CD4-positive, alpha-beta memory T cell (primary cell): ENCODE measurements at regions of chr18 and their contacts with region 1.

Region 1: GRCh38 chr18:45664824-45665763 is 49.8 kb downstream of the SLC14A2 start:
- DNase-seq: peak; percentile 61 to 71 (median 66)
- H3K4me3 ChIP-seq: no peak overlapping the region
- H3K4me3 Mint-ChIP-seq: peak overlapping the region in 7 of 8 donors; percentile 21 to 80 (median 61)
- H3K27ac ChIP-seq: no peak overlapping the region
- H3K27ac Mint-ChIP-seq: peak overlapping the region; percentile 47 to 91 (median 88)
- H3K4me1 ChIP-seq: peaks cover 56% of the 10 kb centered on the region
- H3K4me1 Mint-ChIP-seq: peaks cover 42 to 63% (median 52%) of the 10 kb centered on the region in 4 donors
- H3K27me3 ChIP-seq: no peaks in the 10 kb centered on the region
- H3K27me3 Mint-ChIP-seq: no peaks in the 10 kb centered on the region

Region 2: GRCh38 chr18:45621061-45621511 is 44.0 kb before region 1 on chr18:
- CTCF ChIA-PET with region 1: interaction called, 35 read pairs
- POLR2A ChIA-PET with region 1: no interaction called
- intact Hi-C with region 1: loop called (anchors 5 kb)
- DNase-seq: peak in 4 of 5 donors; percentile 38 to 52 (median 46)
- H3K4me3 ChIP-seq: no peak overlapping the region
- H3K4me3 Mint-ChIP-seq: no peak overlapping the region
- H3K27ac ChIP-seq: no peak overlapping the region
- H3K27ac Mint-ChIP-seq: no peak overlapping the region
- H3K4me1 ChIP-seq: no peaks in the 10 kb centered on the region
- H3K4me1 Mint-ChIP-seq: no peaks in the 10 kb centered on the region
- H3K27me3 ChIP-seq: no peaks in the 10 kb centered on the region
- H3K27me3 Mint-ChIP-seq: peaks cover 4 to 7% of the 10 kb centered on the region in 2 donors

Region 3: DNA sequence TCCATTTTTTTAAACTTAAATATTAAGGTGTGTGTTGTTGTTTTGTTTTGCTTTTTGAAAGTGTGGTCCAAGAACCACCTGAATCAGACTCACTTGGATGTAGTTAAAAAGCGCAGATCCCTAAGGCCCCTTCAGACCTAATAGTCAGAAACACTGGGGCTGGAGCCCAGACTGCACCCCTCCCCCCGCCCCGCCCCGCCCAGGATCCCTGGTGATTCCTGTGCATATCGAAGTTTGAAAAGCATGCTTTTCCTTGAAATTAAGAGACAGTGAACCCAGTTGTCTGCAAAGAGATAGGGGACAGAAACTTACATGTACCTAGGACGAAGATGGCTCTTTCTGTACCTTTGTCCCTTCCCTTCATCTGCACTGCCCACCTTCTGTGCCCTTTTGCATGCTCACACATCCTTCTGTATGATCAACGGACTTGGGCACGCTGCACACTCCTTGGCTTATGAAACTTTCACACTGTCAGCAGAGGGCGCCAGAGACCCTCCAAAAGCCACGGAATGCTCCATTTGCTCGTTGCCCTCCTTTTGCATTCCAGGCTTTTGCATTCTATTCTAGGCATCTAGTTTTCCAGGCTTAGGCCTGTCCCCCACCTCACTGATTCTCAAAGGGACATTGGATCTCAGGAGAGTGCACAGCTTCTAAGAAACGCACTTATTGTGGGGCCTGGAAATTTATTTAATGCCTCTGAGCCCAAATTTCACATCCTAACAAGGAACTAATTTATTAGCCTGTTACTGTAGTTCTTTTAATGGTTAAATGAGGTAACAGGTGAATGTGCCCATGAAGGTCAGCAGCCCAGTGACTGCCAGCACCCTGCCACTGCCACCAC is 26.1 kb after region 1 on chr18:
- CTCF ChIA-PET with region 1: interaction called, 304 read pairs
- POLR2A ChIA-PET with region 1: interaction called, 169 read pairs
- intact Hi-C with region 1: loop called (anchors 1 kb)
- DNase-seq: peak; percentile 67 to 72 (median 68)
- H3K4me3 ChIP-seq: no peak overlapping the region
- H3K4me3 Mint-ChIP-seq: peak overlapping the region in 2 of 8 donors; percentile 59 to 61
- H3K27ac ChIP-seq: no peak overlapping the region
- H3K27ac Mint-ChIP-seq: peak overlapping the region in 3 of 7 donors; percentile 19 to 82 (median 49)
- H3K4me1 ChIP-seq: peaks cover 53% of the 10 kb centered on the region
- H3K4me1 Mint-ChIP-seq: peaks cover 39 to 51% (median 43%) of the 10 kb centered on the region in 4 donors
- H3K27me3 ChIP-seq: no peaks in the 10 kb centered on the region
- H3K27me3 Mint-ChIP-seq: peaks cover 0 to 3% of the 10 kb centered on the region in 2 donors

Region 4: GRCh38 chr18:45751766-45752165 is 86.7 kb after region 1 on chr18:
- CTCF ChIA-PET with region 1: no interaction called
- POLR2A ChIA-PET with region 1: no interaction called
- intact Hi-C with region 1: no loop called
- DNase-seq: no peak
- H3K4me3 ChIP-seq: no peak overlapping the region
- H3K4me3 Mint-ChIP-seq: no peak overlapping the region
- H3K27ac ChIP-seq: no peak overlapping the region
- H3K27ac Mint-ChIP-seq: no peak overlapping the region
- H3K4me1 ChIP-seq: no peaks in the 10 kb centered on the region
- H3K4me1 Mint-ChIP-seq: no peaks in the 10 kb centered on the region
- H3K27me3 ChIP-seq: no peaks in the 10 kb centered on the region
- H3K27me3 Mint-ChIP-seq: peaks cover 10 to 19% of the 10 kb centered on the region in 2 donors

Region 5: DNA sequence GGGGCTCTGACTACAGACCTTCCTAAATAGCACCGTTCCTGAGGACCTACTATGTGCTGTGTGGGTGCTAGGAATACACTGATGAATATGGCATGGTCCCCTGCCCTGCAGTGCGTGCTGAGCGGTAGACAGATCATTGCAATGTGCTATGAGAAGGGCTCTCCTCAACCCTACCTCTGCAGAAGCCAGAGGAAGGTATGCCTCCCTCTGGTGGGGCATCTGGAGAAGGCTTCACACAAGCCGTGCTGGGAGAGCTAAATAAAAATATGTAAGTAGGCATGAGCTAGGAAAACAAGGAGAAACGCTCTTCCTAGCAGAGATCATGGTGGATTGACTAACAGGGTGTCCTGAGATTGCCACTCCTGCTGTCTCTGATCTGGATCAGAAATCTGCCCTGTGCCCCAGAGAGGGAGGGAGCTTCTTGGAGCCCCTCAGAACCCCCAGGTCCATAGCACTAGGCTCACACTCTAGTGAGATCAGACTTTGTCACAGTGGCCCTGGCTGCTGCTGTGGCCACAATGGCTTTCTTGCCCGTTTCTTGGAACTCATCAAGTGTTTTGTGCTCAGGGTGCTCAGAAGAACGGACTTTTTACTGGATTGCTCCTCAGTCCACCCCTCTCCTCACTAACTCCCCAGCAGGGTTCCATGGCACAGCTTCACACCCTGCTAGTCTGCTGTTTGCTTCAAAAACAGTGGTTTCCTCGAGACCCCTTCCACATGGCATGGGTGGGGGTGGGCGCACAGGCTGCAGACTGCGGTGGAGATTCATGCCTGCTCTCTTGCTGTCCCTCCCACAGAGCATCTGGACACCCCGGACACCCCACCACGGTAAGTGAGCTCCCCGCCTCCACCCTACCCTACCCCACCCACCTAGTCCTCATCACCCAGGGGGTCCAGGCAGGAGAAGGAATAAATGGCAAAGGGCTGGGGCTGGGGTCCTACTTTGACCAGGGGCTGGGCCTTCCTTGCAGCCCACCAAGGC is 174.6 kb after region 1 on chr18:
- CTCF ChIA-PET with region 1: interaction called, 16 read pairs
- POLR2A ChIA-PET with region 1: interaction called, 3 read pairs
- intact Hi-C with region 1: loop called (anchors 1 kb)
- DNase-seq: peak in 4 of 5 donors; percentile 26 to 43 (median 32)
- H3K4me3 ChIP-seq: no peak overlapping the region
- H3K4me3 Mint-ChIP-seq: peak overlapping the region in 7 of 8 donors; percentile 3 to 73 (median 46)
- H3K27ac ChIP-seq: no peak overlapping the region
- H3K27ac Mint-ChIP-seq: no peak overlapping the region
- H3K4me1 ChIP-seq: peaks cover 10% of the 10 kb centered on the region
- H3K4me1 Mint-ChIP-seq: peaks cover 9 to 21% (median 14%) of the 10 kb centered on the region in 4 donors
- H3K27me3 ChIP-seq: peaks cover 22% of the 10 kb centered on the region
- H3K27me3 Mint-ChIP-seq: peaks cover 30 to 32% of the 10 kb centered on the region in 2 donors

Region 6: DNA sequence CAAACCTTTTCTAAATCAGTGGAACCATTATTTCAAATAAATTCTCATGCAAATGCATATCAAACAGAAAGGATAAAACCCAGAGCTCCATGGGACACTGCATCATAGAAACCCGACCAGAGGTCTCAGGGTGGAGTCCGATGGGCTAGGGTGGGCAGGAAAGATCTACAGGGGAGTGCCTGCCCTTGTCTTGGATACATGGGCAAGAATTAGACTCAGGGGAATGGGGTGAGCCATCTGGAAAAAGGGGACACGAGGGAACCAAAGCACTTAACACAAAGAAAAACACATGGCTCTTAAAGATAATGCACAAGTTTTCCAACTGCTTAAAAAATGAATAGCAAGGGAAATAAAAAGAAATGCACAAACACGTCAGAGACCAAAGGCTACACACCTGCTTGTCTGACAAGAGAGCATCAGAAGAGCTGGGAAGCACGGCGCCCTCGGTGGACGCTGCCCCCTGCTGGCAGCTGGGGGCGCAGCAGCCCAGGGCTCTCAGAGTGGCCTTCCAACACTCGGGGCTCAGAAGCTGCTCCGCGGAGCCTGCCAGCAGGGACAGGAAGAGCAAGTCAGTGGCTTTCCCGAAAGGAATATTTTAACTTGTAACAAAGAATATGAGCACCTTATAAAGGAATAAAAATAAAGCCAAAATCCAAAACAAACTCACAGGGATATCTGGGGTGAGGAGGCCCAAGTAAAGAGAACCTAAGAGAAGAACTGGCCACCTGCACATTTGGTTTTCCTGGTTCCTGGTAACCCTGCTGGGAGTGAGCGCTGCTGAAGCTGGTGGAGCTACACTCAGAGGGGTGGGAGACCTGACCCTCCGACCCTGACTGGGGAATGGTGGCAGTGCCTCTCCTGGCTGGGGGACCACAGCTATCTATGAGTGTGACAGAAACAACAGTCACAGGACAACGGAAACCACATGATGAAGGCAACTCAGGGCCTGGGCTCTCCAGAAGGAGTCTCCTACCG is 214.9 kb after region 1 on chr18:
- CTCF ChIA-PET with region 1: interaction called, 342 read pairs
- POLR2A ChIA-PET with region 1: interaction called, 39 read pairs
- intact Hi-C with region 1: loop called (anchors 1 kb)
- DNase-seq: peak; percentile 64 to 74 (median 68)
- H3K4me3 ChIP-seq: no peak overlapping the region
- H3K4me3 Mint-ChIP-seq: peak overlapping the region in 1 of 8 donors; percentile 17
- H3K27ac ChIP-seq: no peak overlapping the region
- H3K27ac Mint-ChIP-seq: peak overlapping the region in 5 of 7 donors; percentile 30 to 82 (median 51)
- H3K4me1 ChIP-seq: peaks cover 16% of the 10 kb centered on the region
- H3K4me1 Mint-ChIP-seq: peaks cover 10 to 19% (median 16%) of the 10 kb centered on the region in 4 donors
- H3K27me3 ChIP-seq: no peaks in the 10 kb centered on the region
- H3K27me3 Mint-ChIP-seq: no peaks in the 10 kb centered on the region

Region 7: GRCh38 chr18:45974088-45974536 is 309.0 kb after region 1 on chr18:
- CTCF ChIA-PET with region 1: interaction called, 32 read pairs
- POLR2A ChIA-PET with region 1: interaction called, 3 read pairs
- intact Hi-C with region 1: loop called (anchors 1 kb)
- DNase-seq: peak; percentile 60 to 80 (median 66)
- H3K4me3 ChIP-seq: no peak overlapping the region
- H3K4me3 Mint-ChIP-seq: peak overlapping the region in 3 of 8 donors; percentile 0 to 34 (median 1)
- H3K27ac ChIP-seq: no peak overlapping the region
- H3K27ac Mint-ChIP-seq: no peak overlapping the region
- H3K4me1 ChIP-seq: peaks cover 8% of the 10 kb centered on the region
- H3K4me1 Mint-ChIP-seq: peaks cover 8 to 18% (median 10%) of the 10 kb centered on the region in 4 donors
- H3K27me3 ChIP-seq: no peaks in the 10 kb centered on the region
- H3K27me3 Mint-ChIP-seq: no peaks in the 10 kb centered on the region